Heart left ventricle (tissue), 16 donors: ENCODE measurements at regions of chr3 and their contacts with region 1.

Region 1: DNA sequence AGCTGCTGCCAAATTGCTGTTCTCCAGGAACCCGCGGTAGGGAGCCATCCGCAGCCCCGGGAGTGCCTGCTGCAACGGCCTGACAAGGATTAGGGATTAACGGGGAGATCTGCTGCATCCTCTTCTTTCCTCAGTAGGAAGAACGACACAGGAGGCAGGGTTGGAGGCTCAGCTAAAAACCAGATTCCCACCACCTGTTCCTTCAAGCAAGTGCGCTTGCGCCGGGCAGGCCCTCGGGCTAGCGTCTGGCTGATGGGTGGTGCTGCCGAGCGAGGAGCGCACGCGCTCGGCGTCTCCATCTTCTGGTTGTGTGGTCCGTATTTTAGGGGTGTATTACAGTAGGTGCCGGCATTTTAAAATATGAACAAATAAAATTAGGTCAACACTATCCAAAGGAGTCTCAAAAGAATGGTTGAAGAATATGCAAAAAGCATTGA is 25.4 kb upstream of the SLC25A26 start:
- DNase-seq: peak; percentile 57 to 81 (median 72)
- ATAC-seq: peak; percentile 41 to 76 (median 73)
- H3K4me3 ChIP-seq: peak overlapping the region in 11 of 12 donors; percentile 1 to 56 (median 41)
- H3K27ac ChIP-seq: peak overlapping the region in 11 of 12 donors; percentile 20 to 85 (median 57)
- H3K4me1 ChIP-seq: peaks cover 0 to 4% (median 0%) of the 10 kb centered on the region in 12 donors
- H3K27me3 ChIP-seq: peaks cover 0 to 10% (median 0%) of the 10 kb centered on the region in 9 donors
- CTCF ChIP-seq: peak in 5 of 12 donors; percentile 13 to 48 (median 27)
- POLR2A ChIP-seq: no peak

Region 2: DNA sequence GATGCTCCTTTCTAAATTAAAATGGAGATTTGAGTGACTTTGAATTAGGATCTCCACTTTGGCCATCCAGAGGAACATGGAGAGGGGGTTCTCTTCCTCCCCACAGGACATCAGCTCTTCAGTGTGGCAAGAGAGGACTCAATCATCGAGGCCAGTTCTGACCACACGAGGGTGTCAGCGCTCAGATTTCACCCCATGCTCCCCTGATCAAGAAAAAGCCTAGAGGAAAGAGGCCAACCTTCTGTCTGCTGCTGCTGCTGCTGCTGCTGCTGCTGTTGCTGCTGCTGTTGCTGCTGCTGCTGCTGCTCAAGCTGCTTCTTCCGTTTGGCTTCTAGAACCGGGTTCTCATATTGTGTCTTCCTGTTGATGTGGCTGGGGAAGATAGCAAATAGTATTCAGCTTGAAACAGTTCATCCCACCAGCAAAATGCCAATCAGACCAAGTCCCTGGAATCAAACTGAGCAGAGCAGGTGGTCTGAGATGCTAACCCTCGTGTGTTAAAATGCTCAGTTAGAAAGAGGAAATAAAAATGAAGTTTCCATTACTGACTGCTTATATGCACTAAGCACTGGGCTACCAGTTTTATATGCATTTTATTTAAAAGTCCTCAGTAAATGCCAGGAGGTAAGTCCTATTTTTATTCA is 755.6 kb before region 1 on chr3:
- intact Hi-C with region 1: loop called in 5 of 10 experiments (anchors 10 kb)
- DNase-seq: peak in 4 of 5 donors; percentile 47 to 69 (median 62)
- ATAC-seq: peak; percentile 80 to 91 (median 90)
- H3K4me3 ChIP-seq: no peak overlapping the region
- H3K27ac ChIP-seq: no peak overlapping the region
- H3K4me1 ChIP-seq: peaks cover 0 to 10% (median 6%) of the 10 kb centered on the region in 12 donors
- H3K27me3 ChIP-seq: no peaks in the 10 kb centered on the region
- CTCF ChIP-seq: peak; percentile 30 to 77 (median 64)
- POLR2A ChIP-seq: no peak

Region 3: GRCh38 chr3:66053550-66054094 is 141.7 kb before region 1 on chr3:
- intact Hi-C with region 1: loop called in 1 of 10 experiments (anchors 10 kb)
- DNase-seq: peak in 4 of 5 donors; percentile 26 to 55 (median 45)
- ATAC-seq: peak; percentile 73 to 93 (median 83)
- H3K4me3 ChIP-seq: no peak overlapping the region
- H3K27ac ChIP-seq: peak overlapping the region in 4 of 12 donors; percentile 5 to 47 (median 20)
- H3K4me1 ChIP-seq: peaks cover 0 to 31% (median 16%) of the 10 kb centered on the region in 12 donors
- H3K27me3 ChIP-seq: no peaks in the 10 kb centered on the region
- CTCF ChIP-seq: no peak
- POLR2A ChIP-seq: no peak

Region 4: DNA sequence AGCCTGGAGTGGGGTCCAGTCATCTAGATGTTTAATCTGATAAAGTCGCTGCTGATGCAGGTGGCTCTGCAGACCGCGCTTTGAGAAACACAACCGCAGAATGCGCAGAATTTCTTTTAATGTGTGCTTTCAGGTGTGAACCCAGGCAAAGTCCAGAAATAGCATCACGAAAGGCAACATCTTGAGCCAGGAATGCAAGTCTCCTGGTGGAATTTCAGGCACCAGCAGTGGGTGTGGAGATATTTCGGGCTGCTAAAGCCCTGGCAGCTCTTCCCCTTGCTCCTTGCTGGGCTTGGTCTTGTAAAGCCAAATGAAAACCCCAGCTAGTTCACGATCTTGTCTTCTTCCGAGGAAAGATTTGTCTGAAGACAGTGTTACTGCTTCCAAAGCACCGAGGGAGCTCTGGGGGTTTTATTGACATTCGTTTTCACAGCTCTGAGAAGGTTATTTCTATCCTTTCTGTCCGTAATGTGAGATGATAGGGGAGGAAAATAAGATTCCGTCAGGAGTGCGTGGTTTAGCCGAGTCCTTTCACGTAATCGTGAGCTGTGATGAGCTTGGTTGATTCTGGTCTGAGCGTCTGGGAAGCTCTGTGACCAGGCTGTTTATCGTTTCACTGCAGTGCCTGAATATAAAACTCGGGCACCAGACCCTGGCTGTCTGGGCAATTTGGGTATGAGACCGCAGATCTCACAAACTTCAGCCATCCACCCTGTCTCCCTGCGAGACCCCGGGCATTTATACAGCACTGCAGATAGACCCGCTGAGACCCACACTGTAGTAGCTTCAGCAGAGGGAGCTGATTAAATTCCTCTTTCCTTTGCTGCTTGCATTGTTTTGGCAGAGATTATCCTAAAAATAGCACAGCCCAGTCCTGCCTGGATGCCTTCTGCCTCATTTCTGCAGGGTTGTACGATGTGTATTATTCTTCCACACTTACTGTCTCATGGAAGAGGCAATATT is 41.6 kb before region 1 on chr3:
- intact Hi-C with region 1: loop called in 1 of 10 experiments (anchors 1 kb)
- DNase-seq: peak in 3 of 5 donors; percentile 18 to 34 (median 21)
- ATAC-seq: peak; percentile 79 to 88 (median 80)
- H3K4me3 ChIP-seq: peak overlapping the region in 11 of 12 donors; percentile 8 to 56 (median 46)
- H3K27ac ChIP-seq: peak overlapping the region; percentile 60 to 95 (median 84)
- H3K4me1 ChIP-seq: peaks cover 0 to 32% (median 11%) of the 10 kb centered on the region in 12 donors
- H3K27me3 ChIP-seq: no peaks in the 10 kb centered on the region
- CTCF ChIP-seq: no peak
- POLR2A ChIP-seq: no peak